GM12878 (cell line): ENCODE measurements at regions of chr9 and their contacts with region 1.

Region 1: DNA sequence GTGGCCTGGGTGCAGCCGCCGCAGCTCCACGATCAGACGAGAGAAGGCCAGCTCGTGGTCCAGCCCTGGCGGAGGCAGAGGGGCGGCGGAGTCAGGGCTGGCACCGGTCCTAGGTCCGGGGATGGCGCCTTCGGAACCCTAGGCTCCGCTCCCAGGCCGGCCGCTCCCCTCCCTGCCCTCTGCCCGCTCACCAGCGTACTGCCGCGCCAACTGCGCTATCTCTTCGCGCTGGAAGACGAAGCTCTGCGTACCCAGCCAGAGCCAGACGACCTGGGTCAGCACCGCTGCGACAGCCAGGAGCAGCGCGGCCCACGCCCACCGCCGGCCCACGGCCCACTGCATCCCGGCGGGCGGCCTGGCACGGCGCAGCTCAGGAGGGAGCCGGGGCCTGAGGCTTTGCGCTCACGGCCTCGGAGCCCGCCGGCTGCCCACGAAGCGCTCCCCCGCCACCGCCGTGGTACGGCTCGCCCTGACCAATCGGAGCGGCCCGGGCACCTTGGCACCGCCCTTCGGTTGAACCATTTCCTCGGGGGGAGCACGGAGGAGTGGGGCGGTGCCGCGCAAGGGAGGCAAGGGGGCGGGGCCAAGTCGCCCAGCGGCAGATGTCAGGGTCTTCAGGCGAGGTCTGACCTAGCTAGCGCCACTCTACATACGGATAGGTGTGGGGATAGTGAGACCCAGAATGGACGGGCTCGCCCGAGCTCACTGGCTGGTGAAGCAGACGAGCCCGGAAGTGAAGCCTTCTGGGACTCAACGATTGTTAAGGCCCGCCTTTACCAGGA is at the start of gene SIGMAR1:
- DNase-seq: peak; percentile 61
- ATAC-seq: peak; percentile 94
- H3K4me3 ChIP-seq: peak within 1 kb of the TSS; percentile 72
- H3K27ac ChIP-seq: peak within 1 kb of the TSS; percentile 52
- H3K4me1 ChIP-seq: no peaks in the 10 kb centered on the region; the same call in none of the 2 replicates
- H3K27me3 ChIP-seq: no peaks in the 10 kb centered on the region
- CTCF ChIP-seq: no peak
- EP300 ChIP-seq: no peak
- POLR2A ChIP-seq: peak; percentile 96
- RAD21 ChIP-seq: no peak
- polyA plus RNA-seq, gene SIGMAR1: 7.1 to 19.6 TPM

Region 2: GRCh38 chr9:34546834-34547827 is 90.4 kb before region 1 on chr9:
- CTCF ChIA-PET with region 1: interaction called, 15 read pairs
- POLR2A ChIA-PET with region 1: no interaction called
- RAD21 ChIA-PET with region 1: interaction called, 3 read pairs
- SMC1A ChIA-PET with region 1: no interaction called
- in situ Hi-C with region 1: no loop called
- intact Hi-C with region 1: no loop called
- DNase-seq: no peak
- ATAC-seq: peak; percentile 85
- H3K4me3 ChIP-seq: no peak overlapping the region
- H3K27ac ChIP-seq: no peak overlapping the region
- H3K4me1 ChIP-seq: no peaks in the 10 kb centered on the region
- H3K27me3 ChIP-seq: peaks cover 3 to 8% of the 10 kb centered on the region in 2 experiments
- CTCF ChIP-seq: peak; percentile 48 to 73 (median 70)
- EP300 ChIP-seq: no peak
- POLR2A ChIP-seq: no peak
- RAD21 ChIP-seq: peak; percentile 36

Region 3: GRCh38 chr9:34611829-34612630 is 25.5 kb before region 1 on chr9 and contains the start of gene RPP25L:
- CTCF ChIA-PET with region 1: interaction called, 118 read pairs
- POLR2A ChIA-PET with region 1: interaction called, 5 read pairs
- RAD21 ChIA-PET with region 1: interaction called, 4 read pairs
- SMC1A ChIA-PET with region 1: interaction called, 13 read pairs
- in situ Hi-C with region 1: no loop called
- intact Hi-C with region 1: loop called (anchors 1 kb)
- DNase-seq: no peak
- ATAC-seq: peak; percentile 98
- H3K4me3 ChIP-seq: peak within 1 kb of the TSS; percentile 81
- H3K27ac ChIP-seq: peak within 1 kb of the TSS; percentile 85
- H3K4me1 ChIP-seq: peaks cover 6% of the 10 kb centered on the region; the same call in 1 of the 2 replicates
- H3K27me3 ChIP-seq: no peaks in the 10 kb centered on the region
- CTCF ChIP-seq: no peak
- EP300 ChIP-seq: no peak
- POLR2A ChIP-seq: peak; percentile 99
- RAD21 ChIP-seq: no peak
- polyA plus RNA-seq, gene RPP25L: 7.7 to 14.7 TPM

Region 4: GRCh38 chr9:34620061-34620994 is 17.2 kb before region 1 on chr9 and contains the start of gene DCTN3:
- CTCF ChIA-PET with region 1: interaction called, 118 read pairs
- POLR2A ChIA-PET with region 1: interaction called, 8 read pairs
- RAD21 ChIA-PET with region 1: interaction called, 9 read pairs
- SMC1A ChIA-PET with region 1: interaction called, 12 read pairs
- in situ Hi-C with region 1: no loop called
- intact Hi-C with region 1: no loop called
- DNase-seq: peak; percentile 77
- ATAC-seq: peak; percentile 100
- H3K4me3 ChIP-seq: peak within 1 kb of the TSS; percentile 96
- H3K27ac ChIP-seq: peak within 1 kb of the TSS; percentile 14; the same call in 1 of the 2 replicates
- H3K4me1 ChIP-seq: peaks cover 6% of the 10 kb centered on the region
- H3K27me3 ChIP-seq: peaks cover 6 to 7% of the 10 kb centered on the region in 2 experiments; a peak in 2 of 4 replicates
- CTCF ChIP-seq: no peak
- EP300 ChIP-seq: no peak
- POLR2A ChIP-seq: peak; percentile 93
- RAD21 ChIP-seq: no peak
- polyA plus RNA-seq, gene DCTN3: 19.0 to 52.0 TPM

Region 5: GRCh38 chr9:34659592-34660535 is 22.3 kb after region 1 on chr9:
- CTCF ChIA-PET with region 1: interaction called, 10 read pairs
- POLR2A ChIA-PET with region 1: no interaction called
- RAD21 ChIA-PET with region 1: interaction called, 7 read pairs
- SMC1A ChIA-PET with region 1: interaction called, 7 read pairs
- in situ Hi-C with region 1: no loop called
- intact Hi-C with region 1: no loop called
- DNase-seq: no peak
- ATAC-seq: no peak
- H3K4me3 ChIP-seq: no peak overlapping the region
- H3K27ac ChIP-seq: no peak overlapping the region
- H3K4me1 ChIP-seq: peaks cover 9% of the 10 kb centered on the region
- H3K27me3 ChIP-seq: no peaks in the 10 kb centered on the region
- CTCF ChIP-seq: no peak
- EP300 ChIP-seq: no peak
- POLR2A ChIP-seq: no peak
- RAD21 ChIP-seq: no peak